Ovary (tissue), 10 donors: ENCODE measurements at regions of chr1 and their contacts with region 1.

Region 1: GRCh38 chr1:242546849-242547729 is 22.6 kb upstream of the PLD5 start:
- DNase-seq: no peak
- H3K4me3 ChIP-seq: no peak overlapping the region
- H3K27ac ChIP-seq: no peak overlapping the region
- H3K4me1 ChIP-seq: no peaks in the 10 kb centered on the region
- H3K27me3 ChIP-seq: no peaks in the 10 kb centered on the region
- CTCF ChIP-seq: no peak
- EP300 ChIP-seq: no peak
- POLR2A ChIP-seq: no peak

Region 2: GRCh38 chr1:242585616-242586359 is 38.7 kb after region 1 on chr1:
- intact Hi-C with region 1: no loop called
- DNase-seq: no peak
- H3K4me3 ChIP-seq: no peak overlapping the region
- H3K27ac ChIP-seq: no peak overlapping the region
- H3K4me1 ChIP-seq: no peaks in the 10 kb centered on the region
- H3K27me3 ChIP-seq: no peaks in the 10 kb centered on the region
- CTCF ChIP-seq: no peak
- EP300 ChIP-seq: no peak
- POLR2A ChIP-seq: no peak

Region 3: GRCh38 chr1:242662886-242663285 is 115.8 kb after region 1 on chr1:
- intact Hi-C with region 1: no loop called
- DNase-seq: no peak
- H3K4me3 ChIP-seq: no peak overlapping the region
- H3K27ac ChIP-seq: no peak overlapping the region
- H3K4me1 ChIP-seq: no peaks in the 10 kb centered on the region
- H3K27me3 ChIP-seq: no peaks in the 10 kb centered on the region
- CTCF ChIP-seq: no peak
- EP300 ChIP-seq: no peak
- POLR2A ChIP-seq: no peak

Region 4: GRCh38 chr1:242718967-242719366 is 171.9 kb after region 1 on chr1:
- intact Hi-C with region 1: loop called in 1 of 4 experiments (anchors 10 kb)
- DNase-seq: no peak
- H3K4me3 ChIP-seq: no peak overlapping the region
- H3K27ac ChIP-seq: no peak overlapping the region
- H3K4me1 ChIP-seq: no peaks in the 10 kb centered on the region
- H3K27me3 ChIP-seq: no peaks in the 10 kb centered on the region
- CTCF ChIP-seq: no peak
- EP300 ChIP-seq: no peak
- POLR2A ChIP-seq: no peak

Region 5: DNA sequence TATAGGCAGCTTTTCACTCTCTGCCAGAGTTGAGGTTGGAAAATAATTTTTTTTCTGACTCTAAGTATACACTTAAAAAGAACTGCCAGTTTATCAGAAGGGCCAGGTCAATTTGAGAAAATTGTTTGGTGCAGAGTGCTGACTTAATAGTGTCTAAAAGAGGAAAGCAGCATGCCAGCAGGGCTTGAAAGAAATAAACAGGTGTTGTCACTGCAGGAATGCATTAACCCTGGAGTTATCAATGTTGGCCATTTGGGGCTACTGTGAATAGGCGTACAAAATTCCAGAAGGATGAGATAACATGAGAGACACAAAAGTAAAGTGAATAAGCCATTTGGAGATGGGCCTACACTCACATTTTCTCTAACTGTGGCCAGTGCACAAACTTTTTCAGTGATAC is 198.0 kb after region 1 on chr1:
- intact Hi-C with region 1: no loop called
- DNase-seq: no peak
- H3K4me3 ChIP-seq: no peak overlapping the region
- H3K27ac ChIP-seq: no peak overlapping the region
- H3K4me1 ChIP-seq: no peaks in the 10 kb centered on the region
- H3K27me3 ChIP-seq: no peaks in the 10 kb centered on the region
- CTCF ChIP-seq: no peak
- EP300 ChIP-seq: no peak
- POLR2A ChIP-seq: no peak